Tibial artery (tissue), 4 donors: ENCODE measurements at regions of chr15 and their contacts with region 1.

Region 1: DNA sequence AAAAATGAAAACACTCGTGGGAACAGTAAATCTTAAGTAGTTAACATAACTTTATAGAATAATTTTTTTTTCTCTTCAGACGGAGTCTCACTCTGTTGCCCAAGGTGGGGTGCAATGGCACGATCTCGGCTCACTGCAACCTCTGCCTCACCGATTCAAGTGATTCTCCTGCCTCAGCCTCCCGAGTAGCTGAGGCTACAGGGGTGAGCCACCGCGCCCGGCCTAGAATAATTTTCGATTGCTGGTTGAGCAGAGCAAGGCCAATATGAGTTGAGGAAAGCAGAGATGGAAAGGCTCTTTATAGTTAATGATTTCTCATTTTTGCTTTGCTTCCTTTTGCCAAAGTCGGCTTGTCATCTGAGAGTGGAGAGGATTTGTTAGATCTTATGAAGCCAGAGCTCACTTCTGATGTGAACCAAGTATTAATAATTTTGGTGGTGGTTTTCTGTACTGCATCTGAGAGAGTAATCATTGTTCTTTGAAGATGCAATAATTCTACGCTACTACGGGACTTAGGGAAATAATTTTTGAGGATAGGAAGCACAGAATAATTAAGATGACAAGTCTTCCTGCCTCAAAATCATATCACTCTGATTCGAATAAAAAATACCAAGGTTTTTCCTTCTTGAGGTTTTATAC is 1.6 kb upstream of the GOLM2 start:
- DNase-seq: no peak
- H3K4me3 ChIP-seq: peak overlapping the region; percentile 72 to 79
- H3K27ac ChIP-seq: peak overlapping the region in 1 of 2 donors; percentile 93
- H3K4me1 ChIP-seq: peaks cover 0 to 34% (median 15%) of the 10 kb centered on the region in 4 donors
- H3K27me3 ChIP-seq: no peaks in the 10 kb centered on the region
- CTCF ChIP-seq: peak; percentile 26 to 34

Region 2: DNA sequence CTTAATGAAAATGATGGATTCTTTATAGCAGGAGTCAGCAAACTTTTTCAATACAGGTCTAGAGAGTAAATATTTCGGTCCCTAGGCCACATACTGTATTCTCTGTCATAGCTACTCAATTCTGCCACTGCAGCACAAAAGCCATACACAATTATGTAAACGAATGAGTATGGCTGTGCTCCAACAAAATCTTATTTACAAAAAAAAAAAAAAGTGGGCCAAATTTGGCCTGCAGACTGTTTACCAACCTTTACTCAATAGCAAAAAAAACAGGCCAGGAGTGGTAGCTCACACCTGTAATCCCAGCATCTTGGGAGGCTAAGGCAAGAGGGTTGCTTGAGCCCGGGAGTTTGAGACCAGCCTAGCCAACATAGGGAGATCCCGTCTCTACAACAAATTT is 1407.5 kb before region 1 on chr15:
- intact Hi-C with region 1: no loop called
- DNase-seq: no peak
- H3K4me3 ChIP-seq: no peak overlapping the region
- H3K27ac ChIP-seq: no peak overlapping the region
- H3K4me1 ChIP-seq: no peaks in the 10 kb centered on the region
- H3K27me3 ChIP-seq: no peaks in the 10 kb centered on the region
- CTCF ChIP-seq: no peak

Region 3: DNA sequence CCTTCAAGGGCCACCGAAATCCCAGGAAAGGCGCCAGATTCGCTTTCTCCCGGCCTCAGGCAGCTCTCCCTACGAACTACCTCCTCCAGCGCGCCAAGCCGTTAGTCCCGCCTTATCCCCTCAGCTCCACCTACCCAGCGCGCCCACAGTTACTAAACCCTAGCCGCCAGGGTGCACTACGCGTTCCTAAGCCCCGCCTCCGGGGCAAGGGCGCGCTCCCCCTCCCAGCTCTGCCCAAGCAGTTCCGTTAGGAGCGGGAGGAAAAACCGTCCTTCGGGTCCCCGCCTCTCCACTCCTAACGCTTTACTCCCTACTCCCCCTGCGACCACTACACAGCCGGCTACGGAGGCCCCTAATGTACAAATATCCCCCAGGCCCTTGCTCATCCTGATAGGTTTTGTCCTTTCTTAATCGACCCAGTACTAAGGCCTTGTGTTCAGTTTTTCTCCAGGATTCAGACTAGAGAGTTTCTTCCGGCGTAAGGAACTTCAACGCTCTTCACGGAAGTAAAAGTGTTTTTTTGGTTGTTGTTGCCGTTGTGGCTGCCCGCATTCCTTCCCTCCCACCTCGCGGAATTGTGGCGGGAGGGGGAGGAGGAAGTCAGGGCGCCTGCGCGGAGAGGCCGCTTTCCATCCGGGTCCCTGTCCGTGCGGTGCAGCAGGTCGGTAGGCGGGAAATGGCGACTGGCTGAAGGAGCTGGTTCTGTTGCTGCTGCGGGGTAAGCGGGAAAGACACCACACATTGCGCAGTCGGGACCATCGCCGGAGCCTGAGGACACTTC is 140.2 kb after region 1 on chr15 and contains the start of gene CTDSPL2:
- intact Hi-C with region 1: loop called (anchors 5 kb)
- DNase-seq: peak; percentile 98 to 99
- H3K4me3 ChIP-seq: peak within 1 kb of the TSS; percentile 65 to 84
- H3K27ac ChIP-seq: peak within 1 kb of the TSS; percentile 83 to 93
- H3K4me1 ChIP-seq: peaks cover 0 to 42% (median 10%) of the 10 kb centered on the region in 4 donors
- H3K27me3 ChIP-seq: no peaks in the 10 kb centered on the region
- CTCF ChIP-seq: peak; percentile 6 to 16